IMR-90 (cell line): ENCODE measurements at regions of chr10 and their contacts with region 1.

Region 1: DNA sequence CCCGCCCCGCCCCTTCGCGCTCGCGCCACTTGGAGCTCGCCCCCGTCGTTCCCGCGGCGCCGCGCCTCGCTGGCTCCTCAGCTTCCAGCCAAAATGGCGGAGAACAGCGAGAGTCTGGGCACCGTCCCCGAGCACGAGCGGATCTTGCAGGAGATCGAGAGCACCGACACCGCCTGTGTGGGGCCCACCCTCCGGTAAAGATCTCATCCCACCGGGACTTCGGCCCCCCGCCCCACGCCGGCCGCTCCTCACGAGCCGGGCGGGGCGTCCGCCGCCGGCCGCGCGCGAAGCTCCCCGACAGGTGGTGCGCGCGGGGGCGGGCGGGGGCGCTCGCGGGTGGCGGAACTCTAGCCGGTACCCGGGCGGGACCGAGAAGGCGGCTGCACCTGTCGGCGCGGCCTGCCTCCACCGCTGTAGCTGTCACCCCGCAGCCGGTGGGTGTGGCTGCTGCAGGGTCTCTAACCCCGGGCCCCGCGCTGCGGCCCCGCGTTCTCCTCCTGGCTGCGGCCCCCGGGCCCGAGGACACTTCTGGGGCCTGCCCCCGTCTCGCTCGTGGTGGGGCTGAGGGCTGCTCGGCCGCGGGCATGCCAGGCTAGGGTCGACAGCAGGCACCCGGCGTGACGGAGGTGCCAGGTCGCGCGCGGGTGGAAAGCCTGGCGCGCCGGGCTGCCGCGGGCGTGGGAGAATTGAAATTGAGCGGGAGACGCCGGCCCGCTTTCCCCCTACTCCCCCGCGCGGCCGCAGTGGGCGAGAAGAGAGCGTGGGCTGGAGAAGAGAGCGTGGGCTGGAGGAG is at the start of gene EXOC6:
- DNase-seq: peak; percentile 74
- ATAC-seq: peak; percentile 87
- H3K4me3 ChIP-seq: peak within 1 kb of the TSS; percentile 94
- H3K27ac ChIP-seq: peak within 1 kb of the TSS; percentile 81
- H3K4me1 ChIP-seq: peaks cover 2% of the 10 kb centered on the region; the same call in 1 of the 2 replicates
- H3K27me3 ChIP-seq: no peaks in the 10 kb centered on the region
- CTCF ChIP-seq: no peak
- POLR2A ChIP-seq: peak; percentile 45; the same call in 1 of the 2 replicates
- RAD21 ChIP-seq: no peak
- total RNA-seq, gene EXOC6: 11.5 and 29.2 TPM in 2 replicates

Region 2: DNA sequence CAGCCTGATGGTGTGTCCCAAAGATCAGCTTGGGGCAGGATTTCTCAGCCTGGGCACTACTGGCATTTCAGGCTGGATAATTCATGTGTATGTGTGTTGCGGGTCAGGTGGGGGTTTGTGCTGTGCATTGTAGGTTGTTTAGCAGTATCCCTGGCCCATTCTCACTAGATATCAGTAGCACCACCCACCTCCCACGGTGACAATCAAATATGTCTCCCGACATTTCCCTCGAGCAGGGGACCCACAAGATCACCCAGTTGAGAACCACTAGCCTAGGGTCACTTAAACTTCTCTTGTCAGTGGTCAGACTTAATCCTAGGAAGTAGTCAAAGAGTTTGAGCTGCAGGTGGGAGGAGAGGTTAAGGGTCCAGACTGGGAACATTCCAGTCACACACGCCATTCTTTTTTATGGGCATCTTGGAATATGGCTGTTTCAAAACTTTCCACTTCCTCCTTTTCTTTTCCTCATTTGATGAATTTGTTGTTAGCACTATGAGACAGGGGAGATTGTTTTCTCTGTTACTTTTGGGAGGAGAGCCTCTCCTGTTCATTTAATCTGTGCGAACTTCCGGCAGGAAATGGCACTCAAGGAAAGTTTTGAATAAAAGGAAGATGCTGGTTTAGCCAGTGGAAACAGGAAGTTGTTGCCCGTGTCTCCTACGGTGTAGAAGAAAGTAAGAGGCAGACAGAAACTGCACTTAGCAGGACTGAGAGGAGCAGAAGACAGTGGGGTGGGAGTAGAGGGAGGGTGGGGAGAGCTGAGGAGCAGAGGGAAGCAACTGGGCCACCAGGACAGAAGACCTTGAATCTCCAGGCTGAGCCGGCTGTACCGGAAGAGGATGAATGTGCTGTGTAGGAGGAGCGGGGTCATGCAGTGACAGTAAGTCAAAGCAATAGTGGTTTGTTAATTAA is 17.9 kb before region 1 on chr10:
- CTCF ChIA-PET with region 1: interaction called, 11 read pairs
- POLR2A ChIA-PET with region 1: interaction called, 3 read pairs
- dilution Hi-C with region 1: no loop called
- in situ Hi-C with region 1: no loop called
- intact Hi-C with region 1: no loop called
- DNase-seq: no peak
- ATAC-seq: no peak
- H3K4me3 ChIP-seq: no peak overlapping the region
- H3K27ac ChIP-seq: 0 out of 2 replicates have a peak overlapping the region, but pooled peaks have one; percentile 3
- H3K4me1 ChIP-seq: peaks cover 17% of the 10 kb centered on the region
- H3K27me3 ChIP-seq: no peaks in the 10 kb centered on the region
- CTCF ChIP-seq: no peak
- POLR2A ChIP-seq: no peak
- RAD21 ChIP-seq: no peak